Posterior cingulate gyrus (tissue), 11 donors: ENCODE measurements at regions of chr10 and their contacts with region 1.

Region 1: GRCh38 chr10:96513698-96514561 is at the start of gene TLL2:
- DNase-seq: peak; percentile 82 to 99 (median 88)

Region 2: DNA sequence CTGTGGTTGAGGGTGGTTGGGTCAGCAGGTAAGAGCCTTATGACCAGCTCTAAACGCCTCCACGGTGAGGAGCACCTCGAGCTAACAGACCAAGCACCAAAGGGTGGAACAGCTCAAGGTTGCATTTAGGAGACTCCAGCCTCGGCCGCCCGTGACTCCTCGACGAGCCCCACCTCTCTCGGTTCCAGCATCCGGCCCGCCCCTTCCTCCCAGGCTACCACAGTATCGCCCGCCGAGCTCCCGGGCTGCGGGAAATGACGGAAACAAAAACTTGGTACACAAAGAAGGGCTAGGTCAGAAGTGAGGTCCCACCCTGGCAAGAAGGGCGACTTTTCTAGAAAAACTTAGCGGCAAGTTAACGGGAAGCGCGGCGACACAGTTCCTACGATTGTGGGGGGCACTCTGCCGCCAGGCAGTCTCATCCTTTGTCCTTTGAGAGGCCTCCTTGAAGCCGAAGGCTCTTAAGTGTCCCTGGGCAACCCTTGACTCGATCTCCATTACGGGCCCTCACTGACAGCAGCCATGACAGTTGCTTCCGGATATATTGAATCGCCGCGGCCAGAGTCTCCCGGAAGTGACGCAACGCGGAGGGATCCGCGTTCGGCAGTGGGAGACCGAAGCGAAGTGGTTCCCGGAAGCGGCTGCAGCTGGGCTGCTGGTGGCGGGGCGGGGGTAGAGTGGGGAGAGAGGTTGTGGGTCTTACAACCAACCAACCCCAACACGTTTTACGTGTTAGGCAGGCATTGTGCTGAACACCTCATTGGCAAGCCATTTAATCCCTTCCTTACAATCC is 424.1 kb before region 1 on chr10:
- intact Hi-C with region 1: no loop called
- DNase-seq: peak; percentile 85 to 98 (median 90)

Region 3: GRCh38 chr10:96395931-96396877 is 117.7 kb before region 1 on chr10:
- intact Hi-C with region 1: loop called (anchors 1 kb)
- DNase-seq: peak; percentile 53 to 96 (median 74)

Region 4: DNA sequence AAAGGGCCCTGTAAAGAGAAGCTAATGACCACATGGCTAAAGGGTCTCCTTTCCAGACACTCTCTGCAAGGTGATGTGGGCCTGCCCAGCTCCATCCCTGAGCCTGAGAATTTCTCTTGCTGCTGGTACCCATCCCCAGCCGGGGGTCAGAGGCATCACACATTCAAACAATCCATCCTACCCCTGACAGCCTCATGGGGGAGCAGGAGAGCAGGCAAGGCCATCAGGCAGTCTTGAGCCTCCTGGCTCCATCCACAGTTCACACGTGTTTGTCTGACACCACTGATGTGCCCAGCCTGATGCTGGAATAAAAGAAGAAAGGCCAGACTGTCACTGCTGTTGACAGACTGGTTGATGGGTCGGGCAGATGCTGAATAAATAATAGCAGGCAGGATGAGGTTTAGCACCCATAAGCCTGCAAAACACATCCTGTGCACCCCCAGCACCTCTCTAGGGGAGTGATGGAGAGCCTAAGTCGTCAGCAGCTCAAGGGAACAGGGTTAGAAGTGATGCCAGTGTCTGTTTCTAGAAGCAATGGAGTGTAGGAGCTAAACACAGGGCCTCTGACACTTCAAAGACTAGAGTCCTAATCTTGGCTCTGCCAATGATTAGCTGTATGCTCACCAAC is 43.7 kb before region 1 on chr10:
- intact Hi-C with region 1: loop called (anchors 5 kb)
- DNase-seq: peak in 6 of 10 donors; percentile 43 to 94 (median 61)

Region 5: DNA sequence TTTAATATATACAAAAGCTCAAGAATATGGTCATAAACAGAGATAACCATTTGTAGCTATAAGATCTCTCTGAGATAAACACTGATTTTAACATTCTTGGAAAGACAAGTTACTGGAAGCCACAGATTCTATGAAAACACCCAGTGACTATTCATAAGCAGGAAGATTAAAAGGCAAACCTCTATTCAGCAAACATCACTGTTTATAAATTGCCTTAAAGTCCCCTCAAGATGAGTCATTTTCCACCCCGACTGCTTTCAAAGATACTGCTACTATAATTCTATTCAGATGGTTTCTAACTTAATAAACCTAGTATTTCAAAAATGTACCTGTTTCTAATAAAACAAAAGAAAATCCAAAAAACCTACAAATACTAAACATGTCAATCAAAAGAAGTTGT is 51.8 kb after region 1 on chr10:
- intact Hi-C with region 1: no loop called
- DNase-seq: no peak

Region 6: GRCh38 chr10:96586419-96587263 is 72.7 kb after region 1 on chr10 and contains the start of gene TM9SF3:
- intact Hi-C with region 1: loop called (anchors 5 kb)
- DNase-seq: peak; percentile 82 to 98 (median 90)